CD4-positive, alpha-beta memory T cell (primary cell): ENCODE measurements at regions of chr7 and their contacts with region 1.

Region 1: DNA sequence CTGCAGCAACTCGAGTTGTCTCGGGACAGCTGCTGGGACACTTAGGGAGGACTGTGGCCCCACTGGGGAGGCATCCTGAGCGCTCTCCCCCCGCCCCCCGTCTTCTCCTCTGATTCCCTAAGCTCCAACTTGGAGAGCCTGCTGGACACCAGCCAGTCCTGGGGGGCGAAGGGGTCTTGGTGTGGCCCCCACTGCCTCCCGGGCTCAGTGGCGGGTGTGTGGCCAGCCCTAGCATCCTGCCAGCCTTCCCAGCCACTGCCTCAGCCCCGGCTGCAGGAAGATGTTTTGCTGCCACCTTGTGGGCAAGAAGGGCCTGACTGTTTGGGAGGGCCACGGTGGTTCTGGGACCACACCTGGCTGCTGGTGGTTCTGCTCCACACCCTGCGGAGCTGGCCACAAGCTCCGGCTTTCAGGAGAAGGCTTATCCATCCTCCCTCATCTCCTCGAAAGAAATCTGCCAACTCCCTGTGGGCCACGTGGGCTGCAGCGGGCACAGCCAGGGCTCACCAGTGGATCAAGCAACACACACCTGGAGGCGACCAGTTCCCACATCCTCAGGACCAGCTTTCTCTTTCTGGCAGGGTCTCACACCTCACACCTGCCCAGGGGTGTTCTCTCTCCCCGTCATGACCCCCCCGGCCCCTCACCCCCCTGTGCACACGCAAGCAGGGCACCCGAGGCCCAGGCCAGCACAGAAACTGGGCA is 24.8 kb downstream of the AGAP3 start:
- DNase-seq: peak; percentile 69 to 76 (median 72)
- H3K4me3 ChIP-seq: no peak overlapping the region
- H3K4me3 Mint-ChIP-seq: peak overlapping the region in 1 of 8 donors; percentile 30
- H3K27ac ChIP-seq: no peak overlapping the region
- H3K27ac Mint-ChIP-seq: peak overlapping the region in 1 of 7 donors; percentile 57
- H3K4me1 ChIP-seq: peaks cover 10% of the 10 kb centered on the region
- H3K4me1 Mint-ChIP-seq: peaks cover 1 to 20% (median 10%) of the 10 kb centered on the region in 4 donors
- H3K27me3 ChIP-seq: no peaks in the 10 kb centered on the region
- H3K27me3 Mint-ChIP-seq: no peaks in the 10 kb centered on the region

Region 2: DNA sequence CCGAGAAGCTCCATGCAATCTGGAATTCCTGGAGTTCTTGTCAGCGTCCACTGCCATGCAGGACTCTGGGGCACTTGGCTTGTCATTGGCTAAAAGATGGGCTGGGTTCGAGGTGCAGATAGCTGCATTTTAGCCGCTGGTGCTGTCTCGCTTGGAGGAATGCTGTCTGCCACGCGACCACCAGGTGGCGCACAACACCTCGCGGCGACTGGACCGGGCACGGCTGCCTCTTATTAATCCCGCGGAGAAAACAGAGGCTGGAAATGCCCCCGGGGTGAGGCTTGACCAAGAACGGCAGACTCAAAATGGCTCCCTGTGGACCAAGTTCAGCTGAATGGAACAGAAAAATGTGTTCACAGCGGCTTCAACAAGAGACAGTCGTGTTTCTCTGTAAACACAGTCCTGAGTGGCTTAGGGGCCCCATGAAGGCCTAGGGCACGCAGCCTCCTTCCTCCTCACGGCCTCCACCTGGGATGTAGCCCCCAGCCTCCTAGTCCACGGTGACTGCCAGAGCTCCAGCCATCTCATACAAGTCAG is 212.6 kb before region 1 on chr7:
- CTCF ChIA-PET with region 1: interaction called, 43 read pairs
- POLR2A ChIA-PET with region 1: interaction called, 3 read pairs
- intact Hi-C with region 1: loop called (anchors 1 kb)
- DNase-seq: peak; percentile 62 to 74 (median 65)
- H3K4me3 ChIP-seq: no peak overlapping the region
- H3K4me3 Mint-ChIP-seq: peak overlapping the region in 4 of 8 donors; percentile 1 to 40 (median 20)
- H3K27ac ChIP-seq: no peak overlapping the region
- H3K27ac Mint-ChIP-seq: peak overlapping the region in 2 of 7 donors; percentile 8 to 44
- H3K4me1 ChIP-seq: peaks cover 11% of the 10 kb centered on the region
- H3K4me1 Mint-ChIP-seq: peaks cover 3 to 8% (median 7%) of the 10 kb centered on the region in 4 donors
- H3K27me3 ChIP-seq: peaks cover 13% of the 10 kb centered on the region
- H3K27me3 Mint-ChIP-seq: peaks cover 23 to 38% of the 10 kb centered on the region in 2 donors

Region 3: GRCh38 chr7:151003572-151003971 is 107.5 kb before region 1 on chr7:
- CTCF ChIA-PET with region 1: no interaction called
- POLR2A ChIA-PET with region 1: no interaction called
- intact Hi-C with region 1: no loop called
- DNase-seq: no peak
- H3K4me3 ChIP-seq: no peak overlapping the region
- H3K4me3 Mint-ChIP-seq: no peak overlapping the region
- H3K27ac ChIP-seq: no peak overlapping the region
- H3K27ac Mint-ChIP-seq: peak overlapping the region in 3 of 7 donors; percentile 22 to 80 (median 37)
- H3K4me1 ChIP-seq: peaks cover 41% of the 10 kb centered on the region
- H3K4me1 Mint-ChIP-seq: peaks cover 21 to 52% (median 35%) of the 10 kb centered on the region in 4 donors
- H3K27me3 ChIP-seq: no peaks in the 10 kb centered on the region
- H3K27me3 Mint-ChIP-seq: no peaks in the 10 kb centered on the region

Region 4: GRCh38 chr7:151028131-151028947 is 82.8 kb before region 1 on chr7 and contains the start of gene ABCB8:
- CTCF ChIA-PET with region 1: interaction called, 17 read pairs
- POLR2A ChIA-PET with region 1: interaction called, 16 read pairs
- intact Hi-C with region 1: loop called (anchors 1 kb)
- DNase-seq: peak; percentile 99 to 100 (median 99)
- H3K4me3 ChIP-seq: peak within 1 kb of the TSS; percentile 84 to 88
- H3K4me3 Mint-ChIP-seq: peak within 1 kb of the TSS; percentile 92 to 97 (median 95)
- H3K27ac ChIP-seq: peak within 1 kb of the TSS; percentile 88
- H3K27ac Mint-ChIP-seq: peak within 1 kb of the TSS; percentile 99 to 100 (median 99)
- H3K4me1 ChIP-seq: peaks cover 21% of the 10 kb centered on the region
- H3K4me1 Mint-ChIP-seq: peaks cover 13 to 28% (median 21%) of the 10 kb centered on the region in 4 donors
- H3K27me3 ChIP-seq: no peaks in the 10 kb centered on the region
- H3K27me3 Mint-ChIP-seq: no peaks in the 10 kb centered on the region
- total RNA-seq, gene ABCB8: 71.2 to 75.8 TPM

Region 5: DNA sequence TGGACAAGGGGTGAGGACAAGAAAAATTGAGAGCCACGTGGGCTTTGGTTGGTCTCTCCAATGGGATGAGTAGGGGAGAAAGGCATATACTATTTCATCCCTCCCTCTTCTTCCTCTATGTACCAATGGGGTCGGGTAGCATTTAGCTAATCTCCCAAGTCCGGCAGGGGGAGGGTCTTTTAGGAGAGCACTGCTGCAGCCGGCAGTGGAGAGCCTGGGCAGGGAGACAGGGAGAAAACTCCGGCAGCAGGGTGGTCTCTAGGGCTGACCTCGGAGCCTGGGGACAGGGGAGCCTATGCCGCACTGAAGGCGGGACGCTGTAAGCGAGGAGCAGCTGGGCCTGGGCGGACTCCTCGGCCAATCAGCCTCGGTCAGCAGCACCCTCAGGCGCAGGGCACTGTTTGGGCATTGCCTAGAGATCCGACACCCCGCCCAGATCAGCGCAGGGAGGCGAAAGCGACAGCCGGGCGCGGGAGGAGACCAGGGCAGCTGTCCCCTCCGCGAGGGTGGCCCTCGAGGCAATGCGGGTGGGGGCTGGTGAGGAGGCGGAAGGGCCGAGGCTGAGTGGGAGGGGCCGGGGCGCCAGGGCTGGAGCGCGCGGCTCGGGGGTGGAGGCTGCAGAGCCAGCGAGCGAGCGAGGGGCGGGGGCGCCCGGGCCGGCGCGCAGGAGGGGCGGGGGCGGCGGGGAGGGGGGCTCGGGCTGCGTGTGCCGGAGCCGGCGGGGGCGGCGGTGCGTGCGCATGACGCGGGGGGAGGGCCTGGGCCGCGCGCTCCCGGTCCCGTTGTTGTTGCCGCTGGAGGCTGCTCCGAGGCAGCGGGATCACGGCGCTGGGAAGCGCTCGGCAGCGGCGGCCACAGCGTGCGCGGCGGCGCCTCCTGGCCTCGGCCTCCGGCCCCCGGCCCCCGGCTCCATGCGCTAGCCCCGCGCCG is 25.1 kb before region 1 on chr7 and contains the start of gene AGAP3:
- CTCF ChIA-PET with region 1: interaction called, 29 read pairs
- POLR2A ChIA-PET with region 1: interaction called, 6 read pairs
- intact Hi-C with region 1: loop called (anchors 1 kb)
- DNase-seq: peak; percentile 53 to 68 (median 57)
- H3K4me3 ChIP-seq: peak within 1 kb of the TSS; percentile 69 to 88
- H3K4me3 Mint-ChIP-seq: peak within 1 kb of the TSS; percentile 90 to 94 (median 91)
- H3K27ac ChIP-seq: peak within 1 kb of the TSS; percentile 62
- H3K27ac Mint-ChIP-seq: peak within 1 kb of the TSS; percentile 90 to 98 (median 93)
- H3K4me1 ChIP-seq: peaks cover 54% of the 10 kb centered on the region
- H3K4me1 Mint-ChIP-seq: peaks cover 22 to 57% (median 34%) of the 10 kb centered on the region in 4 donors
- H3K27me3 ChIP-seq: no peaks in the 10 kb centered on the region
- H3K27me3 Mint-ChIP-seq: no peaks in the 10 kb centered on the region
- total RNA-seq, gene AGAP3: 52.9 to 65.8 TPM

Region 6: DNA sequence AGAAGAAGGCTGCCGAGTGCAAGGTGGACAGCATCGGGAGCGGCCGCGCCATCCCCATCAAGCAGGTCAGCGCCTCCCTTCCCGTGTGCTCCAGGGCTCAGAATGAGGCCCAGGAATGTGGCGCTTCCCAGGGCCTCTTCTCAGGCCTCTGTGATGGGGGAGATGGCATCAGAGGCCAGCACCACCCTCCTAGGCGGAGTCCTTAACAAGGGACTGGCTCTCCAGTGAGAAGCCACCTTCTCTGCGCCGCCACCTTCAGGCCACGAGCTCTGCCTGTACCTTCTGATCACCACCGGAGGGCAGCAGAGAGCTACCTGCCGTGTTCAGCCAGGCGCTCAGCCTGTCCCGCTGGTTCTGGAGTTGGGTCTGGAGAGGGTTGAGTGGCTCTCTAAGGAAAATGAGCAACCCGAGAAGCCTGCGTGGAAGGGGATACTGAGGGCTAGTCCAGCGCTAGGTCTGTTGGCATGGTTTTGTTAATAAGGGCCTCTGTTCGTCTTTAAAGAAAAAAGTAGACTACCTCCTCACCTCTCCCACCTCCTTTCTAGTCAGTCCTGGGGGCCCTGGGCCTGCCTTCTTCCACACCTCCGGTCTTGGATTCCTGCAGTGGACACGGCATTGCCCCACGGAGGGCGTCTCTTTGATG is 12.8 kb after region 1 on chr7:
- CTCF ChIA-PET with region 1: interaction called, 12 read pairs
- POLR2A ChIA-PET with region 1: interaction called, 7 read pairs
- intact Hi-C with region 1: no loop called
- DNase-seq: peak; percentile 73 to 82 (median 80)
- H3K4me3 ChIP-seq: no peak overlapping the region
- H3K4me3 Mint-ChIP-seq: no peak overlapping the region
- H3K27ac ChIP-seq: no peak overlapping the region
- H3K27ac Mint-ChIP-seq: peak overlapping the region in 3 of 7 donors; percentile 31 to 70 (median 47)
- H3K4me1 ChIP-seq: peaks cover 4% of the 10 kb centered on the region
- H3K4me1 Mint-ChIP-seq: peaks cover 4 to 19% (median 10%) of the 10 kb centered on the region in 4 donors
- H3K27me3 ChIP-seq: no peaks in the 10 kb centered on the region
- H3K27me3 Mint-ChIP-seq: no peaks in the 10 kb centered on the region

Region 7: GRCh38 chr7:151143261-151144015 is 32.3 kb after region 1 on chr7:
- CTCF ChIA-PET with region 1: no interaction called
- POLR2A ChIA-PET with region 1: no interaction called
- intact Hi-C with region 1: no loop called
- DNase-seq: no peak
- H3K4me3 ChIP-seq: no peak overlapping the region
- H3K4me3 Mint-ChIP-seq: no peak overlapping the region
- H3K27ac ChIP-seq: no peak overlapping the region
- H3K27ac Mint-ChIP-seq: no peak overlapping the region
- H3K4me1 ChIP-seq: no peaks in the 10 kb centered on the region
- H3K4me1 Mint-ChIP-seq: peaks cover 0 to 2% (median 0%) of the 10 kb centered on the region in 4 donors
- H3K27me3 ChIP-seq: no peaks in the 10 kb centered on the region
- H3K27me3 Mint-ChIP-seq: no peaks in the 10 kb centered on the region

Region 8: DNA sequence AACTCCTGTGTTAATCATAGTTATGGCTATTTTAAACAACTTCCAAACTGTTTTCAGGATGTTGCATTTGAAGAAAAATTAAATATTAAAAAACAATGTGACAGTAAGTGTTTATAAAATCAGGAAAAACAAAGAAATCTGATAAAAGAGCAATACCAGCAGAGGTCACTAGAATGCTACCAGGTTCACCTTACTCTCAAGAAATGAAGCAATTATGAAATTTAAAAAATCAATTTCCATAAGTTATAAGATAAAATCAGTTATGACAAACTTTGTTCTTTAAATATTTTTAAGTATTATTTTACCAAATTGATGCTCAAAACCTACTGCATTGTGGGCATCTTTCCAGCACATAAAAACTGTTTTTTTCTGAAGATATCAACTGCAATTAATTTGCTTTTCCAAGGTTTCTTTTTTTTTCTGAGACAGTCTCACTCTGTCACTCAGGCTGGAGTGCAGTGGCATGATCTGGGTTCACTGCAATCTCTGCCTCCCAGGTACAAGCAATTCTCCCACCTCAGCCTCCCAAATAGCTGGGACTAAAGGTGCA is 459.3 kb after region 1 on chr7:
- CTCF ChIA-PET with region 1: no interaction called
- POLR2A ChIA-PET with region 1: no interaction called
- intact Hi-C with region 1: no loop called
- DNase-seq: no peak
- H3K4me3 ChIP-seq: no peak overlapping the region
- H3K4me3 Mint-ChIP-seq: no peak overlapping the region
- H3K27ac ChIP-seq: no peak overlapping the region
- H3K27ac Mint-ChIP-seq: no peak overlapping the region
- H3K4me1 ChIP-seq: no peaks in the 10 kb centered on the region
- H3K4me1 Mint-ChIP-seq: no peaks in the 10 kb centered on the region
- H3K27me3 ChIP-seq: no peaks in the 10 kb centered on the region
- H3K27me3 Mint-ChIP-seq: no peaks in the 10 kb centered on the region